Activated CD4-positive, alpha-beta memory T cell treated with anti-CD3 and anti-CD28 coated beads for 36 hours (primary cell): ENCODE measurements at regions of chr1 and their contacts with region 1.

Region 1: GRCh38 chr1:185317034-185317885 is at the start of gene IVNS1ABP:
- DNase-seq: peak; percentile 98
- H3K4me3 Mint-ChIP-seq: peak within 1 kb of the TSS; percentile 92
- H3K27ac Mint-ChIP-seq: peak within 1 kb of the TSS; percentile 99
- H3K4me1 Mint-ChIP-seq: peaks cover 49% of the 10 kb centered on the region
- H3K27me3 Mint-ChIP-seq: no peaks in the 10 kb centered on the region
- total RNA-seq, gene IVNS1ABP: 133 to 134 TPM

Region 2: DNA sequence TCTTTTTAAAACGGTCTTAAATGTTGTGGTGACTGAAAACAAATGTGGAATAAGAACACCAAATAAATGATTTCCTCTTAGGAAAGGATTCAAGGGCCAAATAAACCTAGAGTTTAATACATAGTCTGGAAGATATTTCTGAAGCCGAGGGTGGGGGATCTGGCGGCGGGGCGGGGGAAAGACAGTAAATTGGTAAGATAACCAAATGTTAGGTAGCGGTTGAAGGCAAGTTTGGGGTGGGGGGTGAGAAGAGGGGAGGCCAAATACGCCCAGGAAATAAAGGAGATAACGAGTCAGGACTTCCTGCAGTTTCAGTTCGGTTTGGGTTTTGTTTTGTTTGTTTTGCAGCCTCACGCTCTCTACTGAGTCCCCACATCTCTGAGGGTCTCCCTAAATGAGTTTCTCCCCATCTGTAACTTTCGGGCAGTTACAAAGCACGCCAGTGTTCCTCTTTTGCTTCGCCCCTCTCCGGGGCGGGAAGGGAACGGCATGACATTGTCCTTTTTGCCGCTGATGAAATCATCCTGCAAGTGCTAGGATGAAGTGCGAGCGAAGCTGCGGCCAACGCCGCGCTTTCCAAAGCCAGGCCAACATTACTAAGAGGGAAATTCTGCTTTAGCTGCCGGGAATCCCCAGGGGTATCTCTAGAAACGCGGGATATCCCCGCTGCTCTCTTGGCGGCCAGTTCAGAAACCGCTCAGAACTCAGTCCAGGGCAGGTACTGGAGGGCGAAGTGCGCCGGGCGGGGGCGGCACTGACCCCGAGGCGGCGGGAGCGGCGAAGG is 343.8 kb before region 1 on chr1:
- CTCF ChIA-PET with region 1: no interaction called
- POLR2A ChIA-PET with region 1: no interaction called
- intact Hi-C with region 1: loop called (anchors 2 kb)
- DNase-seq: peak; percentile 86
- H3K4me3 Mint-ChIP-seq: peak overlapping the region; percentile 94
- H3K27ac Mint-ChIP-seq: peak overlapping the region; percentile 96
- H3K4me1 Mint-ChIP-seq: peaks cover 53% of the 10 kb centered on the region
- H3K27me3 Mint-ChIP-seq: peaks cover 6% of the 10 kb centered on the region

Region 3: GRCh38 chr1:185238447-185238846 is 78.8 kb before region 1 on chr1:
- CTCF ChIA-PET with region 1: interaction called, 5 read pairs
- POLR2A ChIA-PET with region 1: no interaction called
- intact Hi-C with region 1: loop called (anchors 2 kb)
- DNase-seq: no peak
- H3K4me3 Mint-ChIP-seq: no peak overlapping the region
- H3K27ac Mint-ChIP-seq: no peak overlapping the region
- H3K4me1 Mint-ChIP-seq: peaks cover 28% of the 10 kb centered on the region
- H3K27me3 Mint-ChIP-seq: no peaks in the 10 kb centered on the region

Region 4: GRCh38 chr1:185420588-185421081 is 103.4 kb after region 1 on chr1:
- CTCF ChIA-PET with region 1: no interaction called
- POLR2A ChIA-PET with region 1: no interaction called
- intact Hi-C with region 1: loop called (anchors 5 kb)
- DNase-seq: no peak
- H3K4me3 Mint-ChIP-seq: no peak overlapping the region
- H3K27ac Mint-ChIP-seq: peak overlapping the region; percentile 10
- H3K4me1 Mint-ChIP-seq: peaks cover 12% of the 10 kb centered on the region
- H3K27me3 Mint-ChIP-seq: peaks cover 1% of the 10 kb centered on the region

Region 5: GRCh38 chr1:185520188-185520935 is 203.1 kb after region 1 on chr1:
- CTCF ChIA-PET with region 1: no interaction called
- POLR2A ChIA-PET with region 1: no interaction called
- intact Hi-C with region 1: no loop called
- DNase-seq: no peak
- H3K4me3 Mint-ChIP-seq: no peak overlapping the region
- H3K27ac Mint-ChIP-seq: peak overlapping the region; percentile 78
- H3K4me1 Mint-ChIP-seq: peaks cover 4% of the 10 kb centered on the region
- H3K27me3 Mint-ChIP-seq: no peaks in the 10 kb centered on the region

Region 6: DNA sequence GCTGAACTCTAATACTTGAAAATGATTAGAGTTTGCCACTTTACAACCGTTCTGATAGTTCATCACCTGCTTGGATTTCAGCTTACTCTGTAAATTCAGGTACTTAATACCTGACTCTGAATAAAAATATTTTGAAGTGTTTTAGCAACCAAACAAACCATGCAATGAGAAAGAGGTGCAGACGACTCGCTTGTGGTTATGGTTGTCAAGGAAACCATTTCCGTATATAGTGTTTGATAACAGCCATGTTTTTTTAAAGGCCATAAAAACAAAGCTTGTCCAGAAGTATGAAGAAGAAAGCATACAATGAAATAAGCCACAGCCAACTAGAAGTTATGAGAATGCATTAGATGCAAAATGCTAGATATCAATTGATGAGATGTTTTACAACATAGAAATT is 249.7 kb after region 1 on chr1:
- CTCF ChIA-PET with region 1: interaction called, 3 read pairs
- POLR2A ChIA-PET with region 1: interaction called, 8 read pairs
- intact Hi-C with region 1: loop called (anchors 1 kb)
- DNase-seq: peak; percentile 57
- H3K4me3 Mint-ChIP-seq: no peak overlapping the region
- H3K27ac Mint-ChIP-seq: peak overlapping the region; percentile 74
- H3K4me1 Mint-ChIP-seq: peaks cover 62% of the 10 kb centered on the region
- H3K27me3 Mint-ChIP-seq: no peaks in the 10 kb centered on the region

Region 7: DNA sequence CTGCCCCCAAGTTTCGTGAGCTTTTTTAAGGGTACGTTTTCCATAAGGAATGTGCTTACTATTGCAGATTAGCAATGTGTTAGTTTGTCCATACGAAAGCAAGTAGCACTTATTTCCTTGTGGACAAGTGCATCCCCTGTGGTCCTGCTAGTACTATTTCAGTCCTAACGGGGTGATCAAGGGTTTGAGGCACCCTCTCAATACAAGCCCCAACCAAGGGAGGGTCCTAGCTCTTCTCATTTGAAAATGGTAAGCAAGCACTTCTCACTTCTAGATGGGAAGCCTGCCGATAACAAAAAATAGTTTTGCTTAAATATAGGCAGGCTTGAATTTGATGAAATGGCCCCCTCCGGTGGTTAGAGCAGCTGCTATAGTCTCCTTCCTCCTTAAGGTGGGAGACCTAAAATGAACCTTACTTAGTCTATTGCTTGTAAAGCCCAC is 352.9 kb after region 1 on chr1:
- CTCF ChIA-PET with region 1: interaction called, 13 read pairs
- POLR2A ChIA-PET with region 1: interaction called, 6 read pairs
- intact Hi-C with region 1: loop called (anchors 2 kb)
- DNase-seq: peak; percentile 57
- H3K4me3 Mint-ChIP-seq: no peak overlapping the region
- H3K27ac Mint-ChIP-seq: no peak overlapping the region
- H3K4me1 Mint-ChIP-seq: peaks cover 15% of the 10 kb centered on the region
- H3K27me3 Mint-ChIP-seq: no peaks in the 10 kb centered on the region

Region 8: GRCh38 chr1:186375088-186375953 is 1058.1 kb after region 1 on chr1 and contains the starts of genes ODR4 and TPR:
- CTCF ChIA-PET with region 1: interaction called, 5 read pairs
- POLR2A ChIA-PET with region 1: no interaction called
- intact Hi-C with region 1: loop called (anchors 1 kb)
- DNase-seq: peak; percentile 98
- H3K4me3 Mint-ChIP-seq: peak within 1 kb of the TSS; percentile 93
- H3K27ac Mint-ChIP-seq: peak within 1 kb of the TSS; percentile 97
- H3K4me1 Mint-ChIP-seq: peaks cover 43% of the 10 kb centered on the region
- H3K27me3 Mint-ChIP-seq: no peaks in the 10 kb centered on the region
- total RNA-seq, gene ODR4: 11.5 to 12.0 TPM
- total RNA-seq, gene TPR: 130 to 131 TPM